HEK293 (cell line): ENCODE measurements at regions of chr19 and their contacts with region 1.

Region 1: DNA sequence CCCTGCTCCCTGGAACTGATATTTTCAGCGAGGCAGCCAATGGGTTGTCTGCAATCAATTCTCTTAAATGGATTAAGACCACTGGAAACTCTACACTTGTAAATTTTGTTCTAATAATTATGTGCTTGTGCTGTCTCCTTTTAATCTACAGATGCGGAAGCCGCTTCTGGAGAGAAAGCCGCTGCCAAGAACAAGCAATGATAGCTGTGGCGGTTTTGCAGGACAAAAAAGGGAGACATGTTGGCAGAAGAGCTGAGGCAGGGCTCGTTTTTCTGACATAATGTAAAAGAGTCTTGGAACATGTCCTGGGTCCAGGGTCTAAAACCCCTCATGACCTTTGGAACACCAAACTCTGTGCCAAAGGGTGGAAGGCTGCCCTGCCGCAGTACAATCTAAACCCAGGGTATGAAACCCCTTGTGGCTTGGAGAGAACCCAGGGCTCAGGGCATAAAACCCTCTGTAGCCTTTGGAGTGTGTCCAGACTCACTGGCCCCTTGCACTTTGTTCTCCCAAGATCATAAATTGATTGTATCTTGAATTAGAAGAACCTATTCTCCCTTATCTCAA is 12.7 kb downstream of the ZNF417 start:
- H3K4me3 ChIP-seq: no peak overlapping the region
- H3K27ac ChIP-seq: no peak overlapping the region
- H3K4me1 ChIP-seq: no peaks in the 10 kb centered on the region
- CTCF ChIP-seq: no peak

Region 2: GRCh38 chr19:57867868-57868492 is 35.7 kb before region 1 on chr19:
- CTCF ChIA-PET with region 1: no interaction called
- POLR2A ChIA-PET with region 1: no interaction called
- H3K4me3 ChIP-seq: no peak overlapping the region
- H3K27ac ChIP-seq: no peak overlapping the region
- H3K4me1 ChIP-seq: no peaks in the 10 kb centered on the region
- CTCF ChIP-seq: no peak

Region 3: DNA sequence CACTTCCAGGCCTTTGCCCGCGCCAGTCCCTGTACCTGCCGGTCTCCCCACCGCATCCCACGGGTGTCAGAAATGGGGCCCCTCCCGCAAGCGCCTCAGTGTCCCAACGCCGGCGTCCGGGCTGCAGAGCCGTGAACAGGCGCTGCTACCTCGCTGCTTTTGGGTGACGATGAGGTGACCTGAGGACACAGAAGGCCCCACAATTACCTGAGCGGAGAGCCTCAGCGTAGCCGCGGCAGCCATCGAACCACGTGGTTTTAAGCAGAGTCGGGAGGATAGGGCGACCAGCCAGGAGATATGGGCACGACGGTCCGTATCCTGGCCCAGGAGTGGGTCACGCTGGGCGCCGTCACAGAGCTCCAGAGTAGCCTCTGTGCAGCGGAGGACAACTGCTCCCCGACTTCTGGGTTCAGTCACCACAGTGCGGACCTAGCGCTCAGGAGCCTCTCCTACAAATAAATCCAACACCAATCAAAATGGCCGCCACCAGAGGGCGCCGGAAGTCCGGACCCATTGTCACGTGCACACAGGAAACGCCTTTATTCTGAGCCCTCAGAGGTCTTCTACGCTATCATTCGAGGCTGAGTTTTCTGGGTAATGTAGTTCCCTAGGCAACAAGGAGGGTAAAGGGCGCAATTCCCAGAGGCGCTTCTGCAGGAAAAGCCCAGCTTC is 15.0 kb before region 1 on chr19 and contains the start of gene ZNF814:
- CTCF ChIA-PET with region 1: interaction called, 11 read pairs
- POLR2A ChIA-PET with region 1: interaction called, 5 read pairs
- H3K4me3 ChIP-seq: no peak within 1 kb of the TSS; the same call in 1 of the 2 replicates
- H3K27ac ChIP-seq: no peak within 1 kb of the TSS
- H3K4me1 ChIP-seq: no peaks in the 10 kb centered on the region
- CTCF ChIP-seq: no peak

Region 4: DNA sequence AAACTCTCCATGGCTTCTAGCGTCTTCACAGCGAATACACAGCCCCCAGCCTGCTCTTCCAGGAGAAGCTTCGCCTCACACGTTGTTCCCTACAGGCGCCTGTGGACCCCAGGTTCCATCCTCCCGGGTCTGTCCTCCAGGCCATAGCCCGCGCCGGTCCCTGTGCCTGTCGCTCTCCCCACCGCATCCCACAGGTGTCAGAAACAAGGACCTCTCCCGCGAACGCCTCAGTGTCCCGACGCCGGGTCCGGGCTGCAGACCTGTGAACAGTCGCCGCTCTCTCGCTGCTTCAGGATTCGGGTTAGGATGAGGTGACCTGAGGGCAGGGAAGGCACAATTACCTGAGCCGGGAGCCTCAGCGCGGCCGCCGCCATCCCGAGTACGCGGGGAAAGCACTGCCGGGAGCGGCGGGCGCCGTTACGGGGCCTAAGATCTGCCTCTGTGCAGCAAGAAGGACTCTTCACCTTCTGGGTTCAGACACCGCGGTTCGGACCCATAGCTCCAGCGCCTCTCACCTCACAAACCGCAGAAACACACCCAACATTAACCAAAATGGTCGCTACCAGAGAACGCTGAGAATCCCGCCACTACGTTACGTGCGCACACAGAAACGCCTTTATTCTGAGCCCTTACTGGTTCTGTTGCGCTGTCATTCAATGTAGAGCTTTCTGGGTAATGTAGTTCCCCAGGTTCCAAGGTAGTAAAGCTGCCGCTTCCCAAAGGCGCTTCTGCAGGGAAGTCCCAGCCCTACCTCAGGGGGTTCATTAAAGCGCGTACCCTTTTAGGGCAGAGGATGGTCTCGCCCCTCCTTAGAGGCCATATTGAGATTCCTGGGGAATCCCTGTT is 31.3 kb after region 1 on chr19 and contains the start of gene ZNF418:
- CTCF ChIA-PET with region 1: interaction called, 4 read pairs
- POLR2A ChIA-PET with region 1: interaction called, 10 read pairs
- H3K4me3 ChIP-seq: no peak within 1 kb of the TSS
- H3K27ac ChIP-seq: no peak within 1 kb of the TSS
- H3K4me1 ChIP-seq: no peaks in the 10 kb centered on the region
- CTCF ChIP-seq: no peak

Region 5: GRCh38 chr19:58002384-58003173 is 98.9 kb after region 1 on chr19 and contains the start of gene ZNF606:
- CTCF ChIA-PET with region 1: no interaction called
- POLR2A ChIA-PET with region 1: no interaction called
- H3K4me3 ChIP-seq: peak within 1 kb of the TSS; percentile 99
- H3K27ac ChIP-seq: peak within 1 kb of the TSS; percentile 83
- H3K4me1 ChIP-seq: peaks cover 4% of the 10 kb centered on the region
- CTCF ChIP-seq: no peak